ENCODE measurements at regions of chr11 and their contacts with region 1.

Region 1: GRCh38 chr11:62394825-62395538 is 23.9 kb upstream of the SCGB1A1 start:
- DNase-seq: peak; percentile 68
- H3K4me3 ChIP-seq: peak overlapping the region; percentile 53
- H3K27ac ChIP-seq: no peak overlapping the region
- H3K27me3 ChIP-seq: peaks cover 4% of the 10 kb centered on the region
- CTCF ChIP-seq: peak; percentile 67

Region 2: GRCh38 chr11:62419314-62419929 is 24.4 kb after region 1 on chr11:
- CTCF ChIA-PET with region 1: interaction called, 39 read pairs
- POLR2A ChIA-PET with region 1: no interaction called
- DNase-seq: no peak
- H3K4me3 ChIP-seq: no peak overlapping the region
- H3K27ac ChIP-seq: peak overlapping the region; percentile 11
- H3K27me3 ChIP-seq: no peaks in the 10 kb centered on the region
- CTCF ChIP-seq: no peak

Region 3: DNA sequence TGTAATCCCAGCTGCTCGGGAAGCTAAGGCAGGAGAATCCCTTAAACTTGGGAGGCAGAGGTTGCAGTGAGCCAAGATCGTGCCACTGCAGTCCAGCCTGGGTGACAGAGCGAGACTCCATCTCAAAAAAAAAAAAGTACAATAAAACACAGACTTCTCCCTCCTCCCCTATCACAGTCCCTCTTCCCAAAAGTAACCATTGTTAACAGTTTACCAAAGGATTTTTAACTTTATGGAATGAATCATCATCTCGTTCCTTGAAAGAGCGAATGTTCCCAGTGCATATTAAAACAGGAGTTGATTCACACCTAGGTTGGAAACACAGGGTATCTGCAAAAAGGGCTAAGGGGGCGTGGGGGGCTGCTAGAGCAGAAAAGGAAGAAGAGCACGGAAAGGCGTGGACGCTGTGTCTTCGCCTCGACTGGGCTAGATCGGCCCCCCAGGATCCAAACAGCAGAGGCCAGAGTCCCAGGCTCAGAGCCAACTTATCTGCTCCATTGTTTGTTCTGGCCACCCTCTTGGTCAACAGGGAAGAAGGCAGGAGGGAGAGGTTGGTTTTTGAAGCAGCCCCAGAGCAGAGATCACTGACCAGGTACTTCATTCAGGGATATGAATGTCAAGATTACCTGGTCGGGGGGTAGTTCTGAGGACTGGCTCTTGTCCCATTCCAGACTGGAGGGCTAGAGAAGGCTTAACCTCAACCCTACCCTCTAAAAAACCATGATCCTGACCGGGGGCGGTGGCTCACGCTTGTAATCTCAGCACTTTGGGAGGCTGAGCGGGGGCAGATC is 153.8 kb after region 1 on chr11:
- CTCF ChIA-PET with region 1: interaction called, 89 read pairs
- POLR2A ChIA-PET with region 1: interaction called, 19 read pairs
- DNase-seq: no peak
- H3K4me3 ChIP-seq: no peak overlapping the region
- H3K27ac ChIP-seq: no peak overlapping the region
- H3K27me3 ChIP-seq: no peaks in the 10 kb centered on the region
- CTCF ChIP-seq: no peak

Region 4: GRCh38 chr11:62573592-62574362 is 178.8 kb after region 1 on chr11 and contains the start of gene EEF1G:
- CTCF ChIA-PET with region 1: interaction called, 10 read pairs
- POLR2A ChIA-PET with region 1: interaction called, 7 read pairs
- DNase-seq: peak; percentile 100
- H3K4me3 ChIP-seq: peak within 1 kb of the TSS; percentile 92
- H3K27ac ChIP-seq: peak within 1 kb of the TSS; percentile 98
- H3K27me3 ChIP-seq: no peaks in the 10 kb centered on the region
- CTCF ChIP-seq: no peak
- polyA plus RNA-seq, gene EEF1G: 2,186 and 2,474 TPM in 2 replicates

Region 5: GRCh38 chr11:62601394-62602140 is 206.6 kb after region 1 on chr11 and contains the start of gene MTA2:
- CTCF ChIA-PET with region 1: interaction called, 10 read pairs
- POLR2A ChIA-PET with region 1: no interaction called
- DNase-seq: peak; percentile 96
- H3K4me3 ChIP-seq: peak within 1 kb of the TSS; percentile 80
- H3K27ac ChIP-seq: peak within 1 kb of the TSS; percentile 78
- H3K27me3 ChIP-seq: no peaks in the 10 kb centered on the region
- CTCF ChIP-seq: no peak
- polyA plus RNA-seq, gene MTA2: 22.9 and 36.7 TPM in 2 replicates

Measured in AG04450 (cell line).